Ovary (tissue), 10 donors: ENCODE measurements at regions of chr16 and their contacts with region 1.

Region 1: GRCh38 chr16:8251298-8251697 is 339.0 kb downstream of the TMEM114 start:
- DNase-seq: no peak
- H3K4me3 ChIP-seq: no peak overlapping the region
- H3K27ac ChIP-seq: no peak overlapping the region
- H3K4me1 ChIP-seq: no peaks in the 10 kb centered on the region
- H3K27me3 ChIP-seq: no peaks in the 10 kb centered on the region
- CTCF ChIP-seq: no peak
- EP300 ChIP-seq: no peak
- POLR2A ChIP-seq: no peak

Region 2: GRCh38 chr16:8310323-8310722 is 59.0 kb after region 1 on chr16:
- intact Hi-C with region 1: loop called in 1 of 4 experiments (anchors 10 kb)
- DNase-seq: no peak
- H3K4me3 ChIP-seq: no peak overlapping the region
- H3K27ac ChIP-seq: no peak overlapping the region
- H3K4me1 ChIP-seq: no peaks in the 10 kb centered on the region
- H3K27me3 ChIP-seq: no peaks in the 10 kb centered on the region
- CTCF ChIP-seq: no peak
- EP300 ChIP-seq: no peak
- POLR2A ChIP-seq: no peak